Prostate gland (tissue), 2 donors: ENCODE measurements at regions of chr11 and their contacts with region 1.

Region 1: GRCh38 chr11:57527056-57527631 is 3.4 kb downstream of the TIMM10 start:
- DNase-seq: peak; percentile 68
- H3K4me3 ChIP-seq: no peak overlapping the region
- H3K27ac ChIP-seq: no peak overlapping the region
- H3K4me1 ChIP-seq: peaks cover 5% of the 10 kb centered on the region
- H3K27me3 ChIP-seq: no peaks in the 10 kb centered on the region
- CTCF ChIP-seq: peak; percentile 76 to 93 (median 92)
- POLR2A ChIP-seq: no peak

Region 2: DNA sequence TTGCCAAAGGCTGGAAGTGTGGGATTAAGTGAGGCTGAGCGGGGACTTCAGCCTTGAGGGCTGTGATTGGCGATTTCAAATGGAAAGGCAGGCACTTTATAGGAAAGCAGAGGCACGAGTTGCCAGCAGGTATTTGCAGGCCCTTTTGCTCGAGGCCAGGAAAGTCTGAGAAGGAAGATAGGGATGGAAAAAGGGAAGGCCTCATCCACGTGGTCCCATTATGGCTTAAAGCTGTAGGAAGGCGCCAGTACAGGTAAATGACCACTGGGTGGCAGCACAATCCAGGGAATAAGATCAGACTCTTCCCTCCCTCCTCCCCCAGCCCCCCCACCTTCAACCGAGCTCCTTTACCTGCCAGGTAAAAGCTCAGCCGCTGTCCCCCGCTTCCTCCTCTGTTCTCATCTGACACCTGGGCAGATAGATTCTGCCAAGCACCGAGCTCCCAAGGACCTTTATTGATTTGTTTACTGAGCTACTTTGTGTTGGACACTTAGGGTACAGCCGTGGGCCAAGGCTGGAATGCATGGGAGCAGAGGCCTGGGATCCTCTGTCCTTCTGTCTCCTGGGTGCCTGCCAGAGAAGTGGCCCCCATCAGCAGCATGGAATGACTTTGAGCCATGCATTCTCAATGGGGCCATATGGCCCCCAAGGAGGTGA is 181.5 kb before region 1 on chr11:
- intact Hi-C with region 1: loop called (anchors 10 kb)
- DNase-seq: peak; percentile 77
- H3K4me3 ChIP-seq: no peak overlapping the region
- H3K27ac ChIP-seq: no peak overlapping the region
- H3K4me1 ChIP-seq: no peaks in the 10 kb centered on the region
- H3K27me3 ChIP-seq: no peaks in the 10 kb centered on the region
- CTCF ChIP-seq: peak; percentile 63 to 77 (median 66)
- POLR2A ChIP-seq: no peak

Region 3: DNA sequence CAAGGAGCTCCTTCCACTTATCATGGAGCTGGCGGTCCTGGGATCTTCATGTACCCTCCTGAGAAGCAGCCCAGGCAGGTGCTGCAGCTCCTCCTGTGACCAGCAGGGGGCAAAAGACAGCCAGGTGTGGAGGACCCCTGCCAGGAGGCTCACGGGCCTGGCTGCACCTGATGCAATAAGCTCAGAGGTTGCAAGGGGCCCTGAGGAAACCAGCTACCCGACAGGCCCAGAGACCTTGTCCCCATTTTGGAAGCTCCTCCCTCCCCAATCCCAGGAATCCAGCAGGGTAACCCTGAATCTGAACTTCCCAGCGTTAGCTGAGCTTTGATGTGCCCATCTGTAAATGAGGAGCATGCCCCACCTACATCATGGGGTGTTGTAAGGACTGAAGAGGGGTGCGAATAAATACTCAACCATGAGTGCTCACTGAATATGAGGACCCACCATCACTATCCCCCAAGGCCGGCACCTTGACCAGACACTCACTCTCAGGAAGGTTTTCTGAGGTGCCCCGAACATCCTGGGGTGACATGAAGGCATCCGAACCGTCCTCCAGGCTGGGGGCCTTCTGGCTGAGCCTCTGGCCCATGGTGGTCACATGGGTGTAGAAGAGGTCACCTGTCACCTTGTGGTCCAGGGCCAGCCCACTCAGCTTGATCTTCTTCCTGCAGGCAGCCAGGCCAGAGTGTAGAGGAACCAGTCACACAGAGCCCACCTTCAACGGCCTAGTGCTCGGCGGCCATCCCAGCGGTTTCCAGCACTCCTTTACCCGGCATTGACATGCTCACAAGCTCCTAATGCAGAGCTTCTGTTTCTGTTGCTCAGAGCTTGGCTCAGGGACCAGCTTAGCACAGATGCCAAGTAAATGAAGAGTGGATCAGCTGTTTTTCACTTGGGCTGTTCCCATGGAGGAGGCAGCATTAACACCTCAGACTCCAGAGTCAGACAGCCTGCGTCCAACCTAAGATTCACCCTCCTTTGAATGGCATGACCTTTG is 33.3 kb before region 1 on chr11:
- intact Hi-C with region 1: loop called (anchors 5 kb)
- DNase-seq: peak; percentile 65
- H3K4me3 ChIP-seq: no peak overlapping the region
- H3K27ac ChIP-seq: no peak overlapping the region
- H3K4me1 ChIP-seq: peaks cover 2% of the 10 kb centered on the region
- H3K27me3 ChIP-seq: no peaks in the 10 kb centered on the region
- CTCF ChIP-seq: peak; percentile 71 to 85 (median 84)
- POLR2A ChIP-seq: no peak